Activated CD8-positive, alpha-beta T cell treated with anti-CD3 and anti-CD28 coated beads for 36 hours (primary cell): ENCODE measurements at regions of chr2 and their contacts with region 1.

Region 1: GRCh38 chr2:161238560-161239325 is 69.5 kb upstream of the PSMD14 start:
- DNase-seq: peak; percentile 76
- ATAC-seq: peak; percentile 60
- H3K4me3 Mint-ChIP-seq: peak overlapping the region; percentile 84
- H3K27ac Mint-ChIP-seq: peak overlapping the region; percentile 74
- H3K4me1 Mint-ChIP-seq: peaks cover 42% of the 10 kb centered on the region
- H3K27me3 Mint-ChIP-seq: no peaks in the 10 kb centered on the region
- CTCF ChIP-seq: no peak

Region 2: DNA sequence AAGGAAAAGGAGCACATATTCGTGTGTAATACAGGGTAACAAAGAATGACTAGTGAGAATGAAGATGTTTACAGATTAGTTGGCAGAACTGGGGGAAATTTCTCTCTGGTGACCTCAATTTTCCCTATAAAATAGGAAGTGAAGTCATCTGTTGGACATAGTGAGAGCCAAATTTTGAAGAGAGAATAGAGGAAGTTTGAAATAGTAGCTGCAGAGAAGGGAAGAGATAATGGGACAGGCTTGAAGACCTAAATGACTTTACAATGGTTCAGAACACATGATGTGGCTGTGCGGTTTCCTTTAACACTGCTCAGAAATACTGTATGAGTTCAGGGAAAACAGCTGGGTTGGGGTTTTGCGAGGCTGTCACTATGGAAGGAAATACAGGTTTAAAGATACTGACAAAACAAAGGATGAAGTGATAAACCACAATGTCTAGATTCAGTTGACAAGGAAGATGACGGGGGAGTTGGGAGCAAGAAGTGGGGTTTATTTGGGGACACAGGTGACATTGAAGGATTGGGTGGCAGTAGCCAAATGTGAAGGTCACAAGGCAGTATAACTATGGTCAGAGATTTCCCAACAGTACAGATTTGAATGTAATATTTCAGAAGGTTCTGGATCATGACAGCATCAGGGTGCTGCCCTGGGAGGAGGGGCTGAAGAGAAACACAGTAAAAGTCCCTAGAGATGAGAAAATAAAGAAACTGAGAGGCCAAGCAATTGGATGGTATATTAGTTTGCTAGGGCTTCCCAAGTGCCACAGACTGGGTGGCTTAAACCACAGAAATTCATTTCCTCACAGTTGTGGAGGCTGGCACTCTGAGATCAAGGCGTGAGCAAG is 161.2 kb before region 1 on chr2:
- CTCF ChIA-PET with region 1: interaction called, 4 read pairs
- POLR2A ChIA-PET with region 1: no interaction called
- intact Hi-C with region 1: loop called (anchors 10 kb)
- DNase-seq: peak; percentile 92
- ATAC-seq: peak; percentile 85
- H3K4me3 Mint-ChIP-seq: peak overlapping the region; percentile 25
- H3K27ac Mint-ChIP-seq: peak overlapping the region; percentile 87
- H3K4me1 Mint-ChIP-seq: peaks cover 47% of the 10 kb centered on the region
- H3K27me3 Mint-ChIP-seq: no peaks in the 10 kb centered on the region
- CTCF ChIP-seq: no peak

Region 3: GRCh38 chr2:161223139-161223732 is 15.5 kb before region 1 on chr2:
- CTCF ChIA-PET with region 1: interaction called, 17 read pairs
- POLR2A ChIA-PET with region 1: no interaction called
- intact Hi-C with region 1: no loop called
- DNase-seq: no peak
- ATAC-seq: peak; percentile 75
- H3K4me3 Mint-ChIP-seq: no peak overlapping the region
- H3K27ac Mint-ChIP-seq: no peak overlapping the region
- H3K4me1 Mint-ChIP-seq: peaks cover 4% of the 10 kb centered on the region
- H3K27me3 Mint-ChIP-seq: no peaks in the 10 kb centered on the region
- CTCF ChIP-seq: peak; percentile 86